ENCODE measurements at regions of chr1 and their contacts with region 1.

Region 1: GRCh38 chr1:228073857-228074545 is 8.5 kb upstream of the ARF1 start:
- DNase-seq: no peak
- H3K4me3 ChIP-seq: no peak overlapping the region
- H3K27ac ChIP-seq: no peak overlapping the region
- H3K4me1 ChIP-seq: no peaks in the 10 kb centered on the region
- H3K27me3 ChIP-seq: no peaks in the 10 kb centered on the region
- CTCF ChIP-seq: peak in 1 of 3 donors; percentile 19
- POLR2A ChIP-seq: no peak

Region 2: GRCh38 chr1:227607336-227607898 is 466.6 kb before region 1 on chr1:
- intact Hi-C with region 1: no loop called
- DNase-seq: no peak
- H3K4me3 ChIP-seq: no peak overlapping the region
- H3K27ac ChIP-seq: no peak overlapping the region
- H3K4me1 ChIP-seq: no peaks in the 10 kb centered on the region
- H3K27me3 ChIP-seq: no peaks in the 10 kb centered on the region
- CTCF ChIP-seq: no peak
- POLR2A ChIP-seq: no peak

Region 3: DNA sequence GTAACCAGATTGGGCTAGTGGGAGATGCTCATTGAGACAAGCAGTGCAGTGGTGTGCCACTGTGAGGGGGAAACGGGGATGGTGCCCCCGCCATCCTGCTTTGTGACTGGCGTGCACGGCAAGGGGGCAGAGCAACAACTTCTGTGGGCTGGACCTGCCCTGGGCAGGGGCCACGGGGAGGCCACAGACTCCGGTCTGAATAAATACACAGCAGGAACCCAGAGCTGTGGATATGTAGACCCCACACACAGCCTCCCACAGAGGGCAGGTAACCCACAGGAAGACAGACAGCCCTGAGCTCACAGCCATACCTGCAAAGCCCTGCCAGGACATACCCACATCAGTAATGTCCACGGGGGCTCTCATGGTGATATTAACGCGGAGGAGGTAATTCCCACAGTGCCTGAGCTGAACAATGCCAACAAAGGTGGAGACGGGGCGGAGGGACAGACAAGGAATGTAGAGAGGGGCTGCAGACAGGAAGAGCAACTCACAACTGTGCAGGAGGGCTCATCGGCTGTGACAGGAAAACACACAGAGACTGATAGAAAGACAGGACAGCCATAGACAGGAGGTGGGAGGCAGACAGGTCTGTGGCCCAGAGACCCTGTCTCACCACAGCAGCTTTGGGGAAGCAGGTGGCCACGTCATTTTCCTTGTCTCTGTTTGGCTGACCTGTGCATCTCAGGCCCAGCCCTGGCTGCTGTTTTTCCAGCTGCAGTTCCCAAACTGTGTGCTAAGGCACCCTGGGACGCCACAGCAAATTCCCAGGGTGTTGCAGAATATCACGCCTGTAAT is 72.1 kb before region 1 on chr1:
- intact Hi-C with region 1: loop called (anchors 2 kb)
- DNase-seq: peak in 1 of 2 donors; percentile 22
- H3K4me3 ChIP-seq: no peak overlapping the region
- H3K27ac ChIP-seq: no peak overlapping the region
- H3K4me1 ChIP-seq: no peaks in the 10 kb centered on the region
- H3K27me3 ChIP-seq: peaks cover 3 to 51% of the 10 kb centered on the region in 2 donors
- CTCF ChIP-seq: no peak
- POLR2A ChIP-seq: no peak

Region 4: DNA sequence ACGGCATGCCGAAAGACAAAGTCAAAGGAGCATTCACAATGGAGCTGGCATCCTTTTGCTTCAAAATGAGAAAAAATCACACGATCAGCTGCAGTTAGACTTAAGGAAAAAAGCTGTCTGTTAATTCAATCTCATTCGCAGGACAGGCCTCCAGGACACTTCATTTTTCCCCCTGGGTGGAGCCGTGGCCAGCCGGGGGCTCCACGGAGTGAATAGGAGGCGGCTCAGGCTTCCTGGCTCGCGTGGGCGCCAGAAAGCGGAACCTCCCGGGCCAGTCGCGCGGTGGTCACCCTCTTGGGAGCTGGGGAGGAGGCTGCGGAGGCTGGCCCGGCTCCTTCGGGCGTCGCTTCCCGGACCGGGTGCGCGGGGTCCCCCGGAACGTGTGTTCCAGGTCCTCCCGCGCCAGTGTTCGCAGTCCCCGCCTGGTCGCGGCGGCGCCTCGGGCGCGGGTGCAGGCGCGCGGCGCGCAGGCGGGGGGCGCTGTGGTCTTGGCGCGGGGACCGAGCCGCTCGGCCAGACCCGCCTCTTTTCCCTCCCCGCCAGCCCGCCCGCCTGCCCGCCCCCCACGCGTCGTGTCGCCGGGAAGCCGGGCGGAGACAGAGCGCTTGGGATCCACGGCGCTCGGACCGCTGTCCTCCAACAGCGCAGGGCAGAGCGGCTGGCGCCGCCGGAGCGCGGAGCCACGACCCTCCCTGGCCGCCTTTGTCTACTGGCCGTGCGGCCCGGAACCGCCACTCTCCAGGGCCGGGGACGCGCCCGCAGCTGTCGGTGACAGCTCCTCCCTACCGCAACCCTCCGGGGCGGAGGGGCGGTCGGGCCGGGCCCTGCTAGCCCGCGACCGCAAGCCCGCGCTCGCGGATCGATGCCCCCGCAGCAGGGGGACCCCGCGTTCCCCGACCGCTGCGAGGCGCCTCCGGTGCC is 661.1 kb after region 1 on chr1 and contains the start of gene RHOU:
- intact Hi-C with region 1: no loop called
- DNase-seq: peak; percentile 69 to 79
- H3K4me3 ChIP-seq: peak within 1 kb of the TSS; percentile 84 to 87 (median 87)
- H3K27ac ChIP-seq: peak within 1 kb of the TSS; percentile 92 to 94
- H3K4me1 ChIP-seq: peaks cover 0 to 2% of the 10 kb centered on the region in 2 donors
- H3K27me3 ChIP-seq: no peaks in the 10 kb centered on the region
- CTCF ChIP-seq: peak in 2 of 3 donors; percentile 39 to 95
- POLR2A ChIP-seq: peak; percentile 58
- total RNA-seq, gene RHOU: 28.8 to 31.5 (median 29.7) TPM